ENCODE measurements at regions of chr10 and their contacts with region 1.

Region 1: DNA sequence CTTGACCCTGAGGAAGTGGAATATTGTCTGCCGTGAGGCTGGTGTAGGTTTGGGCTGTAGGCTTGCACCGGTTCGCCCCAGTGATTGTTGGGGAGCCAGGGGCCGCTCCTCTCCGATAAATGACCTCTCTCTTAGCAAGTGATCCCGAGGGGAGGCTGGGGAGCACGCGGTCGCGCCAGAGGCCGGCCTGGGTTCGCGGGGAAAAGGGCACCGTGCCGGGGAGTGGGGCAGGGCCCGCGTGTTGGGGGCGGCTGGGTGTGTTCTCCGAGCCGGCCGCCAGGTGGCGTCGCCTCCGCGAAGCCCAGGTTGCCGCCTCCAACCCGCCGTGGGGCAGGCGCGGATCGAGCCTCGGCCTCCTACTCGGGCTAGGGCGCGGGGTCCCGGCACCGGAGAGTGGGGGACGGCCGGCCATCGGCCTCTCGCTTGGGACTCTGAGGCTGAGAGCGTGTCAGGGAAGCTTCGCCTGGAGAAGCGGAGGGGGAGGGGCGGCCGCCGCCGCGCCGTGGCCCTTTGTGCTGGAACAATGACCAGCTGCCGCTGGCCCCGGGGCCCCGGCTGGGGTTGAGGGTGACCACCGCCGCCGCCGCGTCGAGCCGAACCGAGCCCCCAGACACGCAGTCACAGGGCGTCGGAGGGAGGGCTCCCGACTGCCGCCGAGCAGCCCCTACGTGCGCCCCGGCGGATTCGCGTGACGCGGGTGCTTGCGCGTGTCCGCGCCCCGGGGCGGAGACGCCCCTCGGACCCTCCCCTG is 442 bp upstream of the LZTS2 start:
- DNase-seq: peak; percentile 84
- H3K4me3 ChIP-seq: peak overlapping the region; percentile 88
- H3K27ac ChIP-seq: peak overlapping the region; percentile 98
- H3K4me1 ChIP-seq: peaks cover 44% of the 10 kb centered on the region
- H3K27me3 ChIP-seq: no peaks in the 10 kb centered on the region
- CTCF ChIP-seq: peak; percentile 83

Region 2: GRCh38 chr10:100529475-100530298 is 469.5 kb before region 1 on chr10 and contains the start of gene NDUFB8:
- CTCF ChIA-PET with region 1: interaction called, 13 read pairs
- POLR2A ChIA-PET with region 1: no interaction called
- intact Hi-C with region 1: no loop called
- DNase-seq: peak; percentile 92
- H3K4me3 ChIP-seq: peak within 1 kb of the TSS; percentile 76
- H3K27ac ChIP-seq: peak within 1 kb of the TSS; percentile 80
- H3K4me1 ChIP-seq: peaks cover 7% of the 10 kb centered on the region
- H3K27me3 ChIP-seq: no peaks in the 10 kb centered on the region
- CTCF ChIP-seq: no peak
- total RNA-seq, gene NDUFB8: 293 and 297 TPM in 2 replicates

Region 3: DNA sequence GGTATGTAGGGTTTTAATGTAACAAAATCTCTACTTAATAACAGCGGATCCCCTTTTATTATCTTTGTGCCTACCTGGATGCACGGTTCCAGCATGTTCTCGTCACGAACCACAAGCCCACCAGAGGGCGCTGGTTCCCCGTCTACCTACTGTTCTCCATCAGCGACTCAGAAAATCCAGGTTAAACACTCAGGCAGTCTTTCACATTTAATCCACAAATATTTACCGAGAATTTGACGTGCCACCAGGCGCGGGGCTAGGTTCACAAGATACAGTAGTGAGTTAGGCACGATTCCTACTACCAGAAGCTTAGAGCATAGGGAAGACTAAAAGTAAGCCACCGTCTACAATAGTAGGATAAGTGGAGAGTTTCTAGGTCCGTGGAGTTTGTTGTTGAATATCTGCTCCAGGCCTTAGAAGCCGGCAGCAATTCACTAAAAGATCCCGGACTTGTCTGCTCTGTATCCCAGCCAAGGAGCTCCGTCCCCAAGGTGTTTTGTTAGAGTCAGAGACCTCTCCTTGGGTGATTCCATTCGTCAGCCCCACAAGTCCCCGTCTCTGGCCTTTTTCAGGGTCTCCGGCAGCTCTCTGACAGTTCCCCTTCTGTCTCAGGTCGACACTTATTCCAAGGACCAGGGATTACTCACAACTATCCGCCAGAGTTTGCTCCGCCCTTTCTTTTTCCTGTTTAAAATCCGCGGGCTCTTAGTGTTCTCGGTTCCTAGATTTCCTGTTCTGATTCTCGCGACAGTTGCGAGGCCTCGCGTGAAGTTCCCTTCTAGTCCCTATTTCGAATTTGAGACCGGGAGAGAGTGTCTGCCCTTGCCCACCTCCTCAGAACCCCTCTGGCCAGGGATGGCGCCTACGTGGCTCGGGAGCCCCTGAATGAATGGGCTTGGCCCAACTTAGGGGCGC is 61.1 kb after region 1 on chr10:
- CTCF ChIA-PET with region 1: interaction called, 3 read pairs
- POLR2A ChIA-PET with region 1: no interaction called
- intact Hi-C with region 1: loop called (anchors 5 kb)
- DNase-seq: peak; percentile 97
- H3K4me3 ChIP-seq: peak overlapping the region; percentile 73
- H3K27ac ChIP-seq: peak overlapping the region; percentile 98
- H3K4me1 ChIP-seq: peaks cover 62% of the 10 kb centered on the region
- H3K27me3 ChIP-seq: no peaks in the 10 kb centered on the region
- CTCF ChIP-seq: peak; percentile 96

Region 4: GRCh38 chr10:101130984-101131961 is 132.1 kb after region 1 on chr10 and contains the start of gene TLX1:
- CTCF ChIA-PET with region 1: no interaction called
- POLR2A ChIA-PET with region 1: no interaction called
- intact Hi-C with region 1: no loop called
- DNase-seq: no peak
- H3K4me3 ChIP-seq: peak within 1 kb of the TSS; percentile 50
- H3K27ac ChIP-seq: no peak within 1 kb of the TSS
- H3K4me1 ChIP-seq: no peaks in the 10 kb centered on the region
- H3K27me3 ChIP-seq: peaks cover 94% of the 10 kb centered on the region
- CTCF ChIP-seq: no peak
- total RNA-seq, gene TLX1: 0.17 TPM in 1 of 2 replicates, not detected in the other